Right cardiac atrium (tissue), 5 donors: ENCODE measurements at regions of chrX and their contacts with region 1.

Region 1: GRCh38 chrX:14095702-14096101 is 66.0 kb upstream of the GEMIN8 start:
- DNase-seq: peak; percentile 19 to 40 (median 20)
- ATAC-seq: peak in 1 of 2 donors; percentile 59
- H3K4me3 ChIP-seq: no peak overlapping the region
- H3K27ac ChIP-seq: no peak overlapping the region
- H3K4me1 ChIP-seq: no peaks in the 10 kb centered on the region
- H3K27me3 ChIP-seq: no peaks in the 10 kb centered on the region

Region 2: GRCh38 chrX:13569479-13570260 is 526.0 kb before region 1 on chrX and contains the start of gene EGFL6:
- intact Hi-C with region 1: no loop called
- DNase-seq: peak in 2 of 3 donors; percentile 24 to 41
- ATAC-seq: no peak
- H3K4me3 ChIP-seq: peak within 1 kb of the TSS; percentile 18
- H3K27ac ChIP-seq: no peak within 1 kb of the TSS
- H3K4me1 ChIP-seq: peaks cover 4% of the 10 kb centered on the region
- H3K27me3 ChIP-seq: no peaks in the 10 kb centered on the region
- total RNA-seq, gene EGFL6: not detected

Region 3: GRCh38 chrX:15143050-15143824 is 1047.5 kb after region 1 on chrX:
- intact Hi-C with region 1: loop called in 2 of 4 experiments (anchors 10 kb)
- DNase-seq: peak; percentile 33 to 56 (median 54)
- ATAC-seq: no peak
- H3K4me3 ChIP-seq: no peak overlapping the region
- H3K27ac ChIP-seq: no peak overlapping the region
- H3K4me1 ChIP-seq: no peaks in the 10 kb centered on the region
- H3K27me3 ChIP-seq: no peaks in the 10 kb centered on the region